ENCODE measurements at regions of chr9 and their contacts with region 1.

Region 1: GRCh38 chr9:32378993-32379729 is 5.3 kb upstream of the ACO1 start:
- DNase-seq: peak; percentile 70 to 76 (median 73)
- H3K4me3 ChIP-seq: no peak overlapping the region
- H3K4me3 Mint-ChIP-seq: peak overlapping the region in 3 of 8 donors; percentile 2 to 68 (median 11)
- H3K27ac ChIP-seq: no peak overlapping the region
- H3K27ac Mint-ChIP-seq: peak overlapping the region in 4 of 7 donors; percentile 1 to 91 (median 68)
- H3K4me1 ChIP-seq: peaks cover 14% of the 10 kb centered on the region
- H3K4me1 Mint-ChIP-seq: peaks cover 14 to 16% (median 15%) of the 10 kb centered on the region in 4 donors
- H3K27me3 ChIP-seq: no peaks in the 10 kb centered on the region
- H3K27me3 Mint-ChIP-seq: peaks cover 3 to 7% of the 10 kb centered on the region in 2 donors

Region 2: GRCh38 chr9:31418419-31418818 is 960.7 kb before region 1 on chr9:
- CTCF ChIA-PET with region 1: no interaction called
- POLR2A ChIA-PET with region 1: no interaction called
- intact Hi-C with region 1: no loop called
- DNase-seq: no peak
- H3K4me3 ChIP-seq: no peak overlapping the region
- H3K4me3 Mint-ChIP-seq: peak overlapping the region in 1 of 8 donors; percentile 6
- H3K27ac ChIP-seq: no peak overlapping the region
- H3K27ac Mint-ChIP-seq: no peak overlapping the region
- H3K4me1 ChIP-seq: no peaks in the 10 kb centered on the region
- H3K4me1 Mint-ChIP-seq: peaks cover 0 to 8% (median 3%) of the 10 kb centered on the region in 4 donors
- H3K27me3 ChIP-seq: no peaks in the 10 kb centered on the region
- H3K27me3 Mint-ChIP-seq: no peaks in the 10 kb centered on the region

Region 3: GRCh38 chr9:32442433-32442832 is 63.3 kb after region 1 on chr9:
- CTCF ChIA-PET with region 1: interaction called, 13 read pairs
- POLR2A ChIA-PET with region 1: no interaction called
- intact Hi-C with region 1: no loop called
- DNase-seq: no peak
- H3K4me3 ChIP-seq: no peak overlapping the region
- H3K4me3 Mint-ChIP-seq: no peak overlapping the region
- H3K27ac ChIP-seq: no peak overlapping the region
- H3K27ac Mint-ChIP-seq: peak overlapping the region in 1 of 7 donors; percentile 37
- H3K4me1 ChIP-seq: no peaks in the 10 kb centered on the region
- H3K4me1 Mint-ChIP-seq: peaks cover 0 to 1% (median under 1%) of the 10 kb centered on the region in 4 donors
- H3K27me3 ChIP-seq: no peaks in the 10 kb centered on the region
- H3K27me3 Mint-ChIP-seq: no peaks in the 10 kb centered on the region

Region 4: DNA sequence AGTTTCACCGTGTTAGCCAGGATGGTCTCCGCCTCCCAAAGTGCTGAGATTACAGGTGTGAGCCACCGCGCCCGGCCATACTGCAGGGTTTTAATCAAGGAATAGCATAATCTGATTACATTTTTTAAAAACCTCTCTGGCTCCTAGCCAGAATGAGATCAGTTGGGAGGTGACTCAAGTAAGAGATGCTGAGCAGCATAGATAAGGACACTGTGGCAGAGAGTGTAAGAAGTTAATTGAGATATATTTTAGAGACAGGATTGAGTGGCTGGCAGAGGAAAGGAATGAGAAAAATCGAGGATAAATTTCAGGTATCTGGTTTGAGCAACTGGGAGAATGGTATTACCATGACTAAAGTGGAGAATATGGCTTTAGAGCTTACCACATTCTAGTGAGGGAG is 154.2 kb after region 1 on chr9:
- CTCF ChIA-PET with region 1: interaction called, 38 read pairs
- POLR2A ChIA-PET with region 1: no interaction called
- intact Hi-C with region 1: no loop called
- DNase-seq: no peak
- H3K4me3 ChIP-seq: no peak overlapping the region
- H3K4me3 Mint-ChIP-seq: no peak overlapping the region
- H3K27ac ChIP-seq: no peak overlapping the region
- H3K27ac Mint-ChIP-seq: no peak overlapping the region
- H3K4me1 ChIP-seq: no peaks in the 10 kb centered on the region
- H3K4me1 Mint-ChIP-seq: peaks cover 0 to 5% (median 0%) of the 10 kb centered on the region in 4 donors
- H3K27me3 ChIP-seq: no peaks in the 10 kb centered on the region
- H3K27me3 Mint-ChIP-seq: no peaks in the 10 kb centered on the region

Region 5: DNA sequence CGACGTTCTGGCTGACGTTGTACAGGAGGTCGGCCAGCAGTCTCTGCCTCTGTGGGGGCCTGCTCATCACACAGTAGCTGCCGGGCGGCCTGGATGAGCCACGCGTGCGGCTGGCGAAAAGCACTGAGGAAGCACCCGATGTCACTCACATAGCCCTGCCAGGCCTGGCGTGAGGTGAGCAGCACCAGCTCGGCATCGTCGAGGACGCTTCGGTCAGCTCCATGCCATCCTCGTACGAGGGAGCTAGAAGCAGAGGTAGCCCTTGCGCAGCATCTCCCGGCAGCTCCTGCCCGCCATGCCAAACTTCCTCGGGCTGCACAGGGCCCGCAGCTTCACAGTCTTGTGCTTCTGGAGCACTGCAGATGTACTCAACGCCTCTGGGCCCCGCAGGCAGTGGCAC is 187.6 kb after region 1 on chr9:
- CTCF ChIA-PET with region 1: interaction called, 659 read pairs
- POLR2A ChIA-PET with region 1: interaction called, 48 read pairs
- intact Hi-C with region 1: no loop called
- DNase-seq: no peak
- H3K4me3 ChIP-seq: no peak overlapping the region
- H3K4me3 Mint-ChIP-seq: no peak overlapping the region
- H3K27ac ChIP-seq: no peak overlapping the region
- H3K27ac Mint-ChIP-seq: no peak overlapping the region
- H3K4me1 ChIP-seq: peaks cover 6% of the 10 kb centered on the region
- H3K4me1 Mint-ChIP-seq: peaks cover 14 to 24% (median 16%) of the 10 kb centered on the region in 4 donors
- H3K27me3 ChIP-seq: no peaks in the 10 kb centered on the region
- H3K27me3 Mint-ChIP-seq: no peaks in the 10 kb centered on the region

Region 6: DNA sequence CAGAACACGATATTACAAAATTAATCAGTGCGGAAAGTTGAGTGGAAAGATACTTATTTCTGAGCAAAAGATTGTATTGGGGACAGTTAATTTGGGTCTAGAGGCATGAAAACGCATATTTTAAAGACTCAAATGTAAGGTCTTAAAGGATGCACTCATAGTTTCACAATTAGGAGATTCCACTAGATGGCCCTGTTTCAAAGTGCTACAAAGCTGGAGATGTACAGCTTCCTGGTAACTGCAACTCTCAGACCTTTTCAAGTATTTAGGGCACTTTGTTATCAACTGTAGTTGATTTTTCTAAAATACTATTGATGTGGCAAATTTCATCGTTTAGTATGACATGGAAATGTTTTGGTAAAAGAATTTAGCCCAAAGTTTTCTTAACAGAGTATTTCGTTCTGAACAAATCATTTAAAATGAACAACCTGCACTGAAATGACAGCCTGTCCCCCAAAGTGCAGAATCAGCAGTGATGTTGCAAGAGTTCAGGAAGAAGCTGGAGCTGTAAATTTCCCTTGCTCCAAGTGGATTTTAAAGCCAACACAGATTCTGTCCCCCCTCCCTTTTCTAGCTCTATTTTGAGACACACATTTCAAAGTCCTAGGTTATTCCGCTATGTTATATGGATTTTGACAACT is 210.0 kb after region 1 on chr9:
- CTCF ChIA-PET with region 1: interaction called, 659 read pairs
- POLR2A ChIA-PET with region 1: no interaction called
- intact Hi-C with region 1: no loop called
- DNase-seq: peak in 1 of 5 donors; percentile 25
- H3K4me3 ChIP-seq: no peak overlapping the region
- H3K4me3 Mint-ChIP-seq: no peak overlapping the region
- H3K27ac ChIP-seq: no peak overlapping the region
- H3K27ac Mint-ChIP-seq: no peak overlapping the region
- H3K4me1 ChIP-seq: no peaks in the 10 kb centered on the region
- H3K4me1 Mint-ChIP-seq: no peaks in the 10 kb centered on the region
- H3K27me3 ChIP-seq: no peaks in the 10 kb centered on the region
- H3K27me3 Mint-ChIP-seq: peaks cover 19% of the 10 kb centered on the region in 2 donors

Measured in CD4-positive, alpha-beta memory T cell (primary cell).